ENCODE measurements at regions of chr1 and their contacts with region 1.

Region 1: GRCh38 chr1:204506961-204507387 is 9.2 kb upstream of the MDM4 start:
- DNase-seq: peak; percentile 95 to 98 (median 98)
- H3K4me3 ChIP-seq: peak overlapping the region in 6 of 7 experiments; percentile 65 to 95 (median 80)
- H3K27ac ChIP-seq: peak overlapping the region; percentile 89 to 99
- H3K4me1 ChIP-seq: peaks cover 3 to 34% (median 14%) of the 10 kb centered on the region in 4 experiments
- H3K27me3 ChIP-seq: no peaks in the 10 kb centered on the region

Region 2: DNA sequence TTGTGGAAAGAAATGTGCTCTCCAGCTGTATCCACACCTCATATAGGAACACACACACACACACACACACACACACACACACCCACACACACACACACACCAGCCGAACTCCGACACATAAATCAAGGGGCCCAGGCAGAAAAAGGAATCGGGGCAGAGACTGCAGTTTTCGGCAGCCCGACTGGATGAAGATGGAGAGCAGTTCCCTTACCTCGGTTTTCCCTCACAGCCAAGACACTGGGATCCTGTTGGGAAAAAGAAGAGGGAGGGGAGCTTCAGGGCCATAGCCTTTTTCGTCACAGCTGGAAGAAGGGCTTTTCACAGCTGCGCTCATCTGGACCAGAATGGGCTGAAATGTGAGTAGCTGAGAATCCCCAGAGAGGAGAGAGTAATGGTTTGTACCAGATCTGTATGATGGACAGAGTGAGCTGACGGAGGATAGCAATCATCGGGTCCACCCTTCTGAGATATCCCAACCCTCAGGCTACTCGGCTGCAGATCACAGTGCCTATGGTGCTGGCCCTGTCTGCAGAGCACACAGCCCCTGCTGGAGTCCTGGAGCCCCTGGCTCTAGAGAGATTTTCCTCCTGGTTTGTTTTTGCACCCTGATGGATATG is 50.0 kb before region 1 on chr1:
- CTCF ChIA-PET with region 1: interaction called, 916 read pairs
- POLR2A ChIA-PET with region 1: interaction called, 3 read pairs
- DNase-seq: peak; percentile 28 to 67 (median 47)
- H3K4me3 ChIP-seq: no peak overlapping the region
- H3K27ac ChIP-seq: no peak overlapping the region
- H3K4me1 ChIP-seq: peaks cover 14 to 72% (median 55%) of the 10 kb centered on the region in 4 experiments
- H3K27me3 ChIP-seq: no peaks in the 10 kb centered on the region

Region 3: GRCh38 chr1:204465546-204466415 is 41.2 kb before region 1 on chr1:
- CTCF ChIA-PET with region 1: interaction called, 11 read pairs
- POLR2A ChIA-PET with region 1: interaction called, 3 read pairs
- DNase-seq: peak; percentile 71 to 90 (median 84)
- H3K4me3 ChIP-seq: peak overlapping the region in 2 of 7 experiments; percentile 11 to 24
- H3K27ac ChIP-seq: peak overlapping the region in 1 of 2 experiments; percentile 1
- H3K4me1 ChIP-seq: peaks cover 12 to 70% (median 64%) of the 10 kb centered on the region in 4 experiments
- H3K27me3 ChIP-seq: no peaks in the 10 kb centered on the region

Region 4: GRCh38 chr1:204556458-204557052 is 49.6 kb after region 1 on chr1:
- CTCF ChIA-PET with region 1: no interaction called
- POLR2A ChIA-PET with region 1: no interaction called
- DNase-seq: no peak
- H3K4me3 ChIP-seq: no peak overlapping the region
- H3K27ac ChIP-seq: no peak overlapping the region
- H3K4me1 ChIP-seq: no peaks in the 10 kb centered on the region
- H3K27me3 ChIP-seq: no peaks in the 10 kb centered on the region